Calu3 (cell line): ENCODE measurements at regions of chr2 and their contacts with region 1.

Region 1: DNA sequence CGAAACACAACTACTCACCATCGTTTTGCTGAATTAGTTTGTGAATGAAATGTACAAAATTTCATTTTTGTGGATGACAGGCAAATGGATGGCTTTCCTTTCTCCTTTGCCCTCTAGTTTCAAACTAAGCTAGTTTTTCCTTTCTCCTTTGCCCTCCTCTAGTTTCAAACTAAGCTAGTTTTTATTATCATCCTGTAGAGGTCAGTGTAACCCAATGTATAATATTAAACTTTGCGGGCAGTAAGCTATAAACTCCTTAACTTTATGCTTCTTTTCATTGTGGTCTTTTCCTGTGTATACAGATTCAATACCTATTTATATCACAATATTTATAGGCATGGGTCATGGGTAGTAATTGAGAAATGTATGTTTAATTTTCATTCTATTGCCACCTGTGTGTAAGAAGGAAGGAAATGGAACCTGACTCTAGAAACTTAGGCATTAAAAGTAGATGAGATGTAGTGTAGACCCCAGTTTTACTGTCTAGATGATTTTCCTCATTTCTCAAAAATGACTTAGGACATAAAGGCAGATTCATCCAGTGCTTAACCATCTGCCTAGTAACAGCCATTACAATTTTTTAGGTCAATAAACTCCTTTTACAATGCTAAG is 58.1 kb downstream of the MAP3K19 start:
- DNase-seq: no peak
- H3K4me3 Mint-ChIP-seq: no peak overlapping the region
- H3K27ac Mint-ChIP-seq: no peak overlapping the region
- H3K4me1 Mint-ChIP-seq: no peaks in the 10 kb centered on the region
- H3K27me3 Mint-ChIP-seq: peaks cover 36% of the 10 kb centered on the region
- CTCF ChIP-seq: no peak

Region 2: DNA sequence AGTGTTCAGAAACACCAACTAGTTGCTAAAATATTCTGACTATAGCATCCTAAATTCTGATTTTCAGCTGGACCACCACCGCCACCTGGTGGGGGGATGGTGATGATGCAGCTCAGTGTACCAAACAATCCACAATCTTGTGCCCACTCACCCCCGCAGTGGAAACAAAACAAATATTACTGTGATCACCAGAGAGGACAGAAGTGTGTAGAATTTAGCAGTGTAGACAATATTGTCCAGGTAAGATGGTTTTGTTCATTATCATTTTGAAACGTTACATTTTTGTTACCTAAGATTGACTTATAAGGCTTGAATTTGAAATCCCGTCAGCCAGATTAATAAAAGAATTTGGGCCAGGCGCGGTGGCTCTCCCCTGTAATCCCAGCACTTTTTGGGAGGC is 720.9 kb after region 1 on chr2:
- CTCF ChIA-PET with region 1: interaction called, 29 read pairs
- intact Hi-C with region 1: loop called (anchors 1 kb)
- DNase-seq: peak; percentile 70
- H3K4me3 Mint-ChIP-seq: no peak overlapping the region
- H3K27ac Mint-ChIP-seq: no peak overlapping the region
- H3K4me1 Mint-ChIP-seq: no peaks in the 10 kb centered on the region
- H3K27me3 Mint-ChIP-seq: no peaks in the 10 kb centered on the region
- CTCF ChIP-seq: peak; percentile 77

Region 3: GRCh38 chr2:135741395-135742324 is 752.6 kb after region 1 on chr2 and contains the start of gene UBXN4:
- CTCF ChIA-PET with region 1: interaction called, 11 read pairs
- intact Hi-C with region 1: no loop called
- DNase-seq: peak; percentile 93
- H3K4me3 Mint-ChIP-seq: peak within 1 kb of the TSS; percentile 86
- H3K27ac Mint-ChIP-seq: peak within 1 kb of the TSS; percentile 95
- H3K4me1 Mint-ChIP-seq: peaks cover 26% of the 10 kb centered on the region
- H3K27me3 Mint-ChIP-seq: no peaks in the 10 kb centered on the region
- CTCF ChIP-seq: no peak
- total RNA-seq, gene UBXN4: 87.8 and 94.4 TPM in 2 replicates

Region 4: DNA sequence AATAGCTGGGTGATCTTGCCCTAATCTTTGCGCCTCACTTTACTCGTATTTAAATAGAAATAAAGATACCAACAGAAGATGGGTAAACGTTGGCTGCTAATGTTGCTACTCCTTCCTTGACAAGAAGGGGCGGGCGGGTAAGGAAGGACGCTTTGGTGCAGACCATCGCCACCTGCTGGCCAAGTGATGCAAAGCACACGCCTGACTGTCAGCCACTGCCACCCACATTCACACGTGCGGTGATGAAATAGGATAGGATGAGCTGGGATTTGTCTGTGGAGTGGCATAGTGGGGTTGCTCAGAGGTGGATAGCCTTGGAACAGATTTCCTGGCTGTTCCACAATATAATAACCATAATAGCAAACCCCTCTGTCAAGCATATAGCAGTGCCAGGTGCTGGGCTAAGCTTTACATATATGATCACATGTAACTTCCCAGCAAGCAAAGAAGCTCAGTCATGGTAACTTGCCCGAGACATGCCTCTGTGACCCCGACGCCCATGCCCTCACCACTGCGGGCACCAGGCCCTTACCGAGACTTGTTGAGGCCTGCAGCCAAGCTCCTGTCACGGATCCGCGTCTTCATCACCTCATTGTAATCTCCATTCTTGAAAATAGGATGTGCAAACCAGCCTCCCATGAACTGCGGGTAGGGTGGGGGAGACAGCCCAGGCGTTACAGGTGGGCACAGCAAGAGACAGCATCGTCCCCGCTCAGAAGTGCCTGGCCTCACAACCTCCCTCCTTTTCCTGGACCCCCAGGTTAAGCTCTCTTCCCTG is 808.6 kb after region 1 on chr2:
- CTCF ChIA-PET with region 1: interaction called, 10 read pairs
- intact Hi-C with region 1: loop called (anchors 1 kb)
- DNase-seq: peak; percentile 76
- H3K4me3 Mint-ChIP-seq: no peak overlapping the region
- H3K27ac Mint-ChIP-seq: no peak overlapping the region
- H3K4me1 Mint-ChIP-seq: peaks cover 9% of the 10 kb centered on the region
- H3K27me3 Mint-ChIP-seq: no peaks in the 10 kb centered on the region
- CTCF ChIP-seq: peak; percentile 68